Ascending aorta (tissue), 2 donors: ENCODE measurements at regions of chr4 and their contacts with region 1.

Region 1: DNA sequence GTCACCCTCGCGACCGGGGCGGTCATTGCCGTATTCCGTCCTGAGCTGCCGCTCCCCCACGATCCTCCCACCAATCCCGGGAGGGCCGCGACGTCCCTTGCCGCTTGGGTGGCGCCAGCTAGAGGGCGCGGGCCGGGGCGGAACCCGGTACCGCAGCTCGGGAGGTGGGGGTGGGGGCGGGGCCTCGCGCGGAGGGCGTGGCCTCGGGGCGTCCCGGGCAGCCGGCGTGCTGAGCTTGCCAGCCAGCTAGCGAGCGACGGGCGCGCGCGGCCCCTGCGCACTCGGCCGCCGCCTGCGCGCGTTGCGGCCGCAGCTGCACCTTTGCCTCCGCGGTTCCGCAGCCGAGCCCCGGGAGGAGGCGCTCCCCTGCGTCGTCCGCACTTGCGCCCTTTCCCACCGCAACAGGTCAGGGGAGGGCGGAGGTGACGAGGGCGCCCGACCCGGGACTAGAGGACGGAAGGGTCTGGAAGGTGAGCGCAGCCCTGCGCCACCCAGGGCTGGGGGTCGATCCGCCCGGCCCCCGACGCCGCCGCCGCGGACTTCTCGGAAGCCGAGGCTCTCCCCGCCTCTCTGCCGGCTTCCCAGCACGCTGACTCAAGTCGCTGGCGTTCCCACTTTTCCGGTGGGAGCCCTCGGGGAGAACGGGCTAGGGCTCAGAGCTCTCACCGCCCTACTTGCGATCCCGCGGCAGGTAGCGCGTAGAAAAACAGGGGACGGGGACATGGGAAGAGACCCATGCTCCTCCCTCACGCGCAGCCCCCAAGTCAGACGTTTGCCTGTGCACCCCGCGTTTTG is at the start of gene AFF1:
- DNase-seq: peak; percentile 71 to 97
- H3K4me3 ChIP-seq: peak within 1 kb of the TSS; percentile 91 to 98
- H3K27ac ChIP-seq: peak within 1 kb of the TSS; percentile 94 to 99
- H3K4me1 ChIP-seq: peaks cover 5 to 21% of the 10 kb centered on the region in 2 donors
- H3K27me3 ChIP-seq: no peaks in the 10 kb centered on the region
- CTCF ChIP-seq: peak; percentile 23 to 52 (median 33)
- total RNA-seq, gene AFF1: 112 TPM

Region 2: DNA sequence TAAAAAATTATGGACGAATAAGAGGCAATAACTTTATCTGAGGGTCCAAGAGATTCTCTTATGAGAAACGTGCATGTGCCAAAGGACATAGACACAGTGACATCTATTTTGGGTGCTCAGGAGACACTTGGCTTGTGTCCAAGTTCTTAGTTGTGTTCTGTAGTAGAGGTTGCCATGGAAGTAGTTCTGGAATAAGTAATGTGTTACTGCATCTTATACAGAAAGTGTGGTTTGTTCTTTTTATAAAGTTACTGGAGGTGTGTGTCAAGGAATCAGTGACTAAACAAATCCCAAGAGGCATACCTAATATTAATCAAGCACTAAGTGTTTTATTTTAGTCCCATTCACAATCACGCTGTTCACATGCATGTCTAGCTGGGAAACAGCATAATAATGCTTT is 1154.3 kb before region 1 on chr4:
- intact Hi-C with region 1: loop called (anchors 10 kb)
- DNase-seq: no peak
- H3K4me3 ChIP-seq: peak overlapping the region; percentile 28 to 60
- H3K27ac ChIP-seq: peak overlapping the region; percentile 51 to 79
- H3K4me1 ChIP-seq: peaks cover 0 to 18% of the 10 kb centered on the region in 2 donors
- H3K27me3 ChIP-seq: no peaks in the 10 kb centered on the region
- CTCF ChIP-seq: no peak

Region 3: GRCh38 chr4:87093443-87094123 is 158.6 kb after region 1 on chr4:
- intact Hi-C with region 1: loop called (anchors 1 kb)
- DNase-seq: no peak
- H3K4me3 ChIP-seq: no peak overlapping the region
- H3K27ac ChIP-seq: peak overlapping the region in 1 of 2 donors; percentile 28
- H3K4me1 ChIP-seq: peaks cover 0 to 11% of the 10 kb centered on the region in 2 donors
- H3K27me3 ChIP-seq: no peaks in the 10 kb centered on the region
- CTCF ChIP-seq: peak; percentile 30 to 71 (median 57)

Region 4: DNA sequence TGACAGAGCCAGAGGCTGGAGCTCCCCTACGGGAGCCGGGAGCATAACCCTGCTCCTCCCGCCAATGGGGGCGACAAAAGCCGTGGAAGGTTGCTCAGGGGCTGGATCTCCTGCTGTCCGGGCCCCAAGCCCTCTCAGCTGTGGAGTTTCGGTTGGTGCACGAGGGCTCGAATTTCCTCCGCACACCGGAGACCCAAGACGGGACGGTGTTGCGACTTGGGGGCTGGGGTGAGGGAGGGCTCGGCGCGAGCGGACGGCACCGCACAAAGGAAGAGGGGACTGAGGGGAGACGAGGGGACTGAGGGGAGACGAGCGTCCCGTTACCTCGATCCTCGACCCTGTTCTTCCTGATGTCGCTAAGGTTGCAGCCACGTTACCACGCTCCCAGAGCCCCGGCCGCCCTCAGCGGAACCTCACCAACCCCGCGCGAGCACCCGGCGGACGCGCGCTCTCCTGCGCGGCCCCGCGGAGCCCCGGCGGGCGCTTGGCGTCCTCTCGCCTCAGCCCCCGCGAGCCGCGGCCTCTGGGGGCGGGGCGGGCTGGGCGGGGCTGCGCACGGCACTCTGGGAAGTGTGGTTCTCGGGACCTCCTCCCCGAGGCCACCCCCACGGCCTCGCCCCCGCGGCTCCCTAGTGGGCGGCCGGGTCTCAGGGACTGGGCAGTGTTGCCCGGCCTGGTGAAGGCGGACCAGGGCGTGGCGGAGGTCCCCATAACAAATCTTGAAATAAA is 285.3 kb after region 1 on chr4 and contains the start of gene KLHL8:
- intact Hi-C with region 1: loop called (anchors 2 kb)
- DNase-seq: peak; percentile 63 to 95
- H3K4me3 ChIP-seq: peak within 1 kb of the TSS; percentile 91 to 99
- H3K27ac ChIP-seq: peak within 1 kb of the TSS; percentile 81 to 93
- H3K4me1 ChIP-seq: peaks cover 0 to 6% of the 10 kb centered on the region in 2 donors
- H3K27me3 ChIP-seq: no peaks in the 10 kb centered on the region
- CTCF ChIP-seq: no peak
- total RNA-seq, gene KLHL8: 5.4 TPM

Region 5: GRCh38 chr4:88284439-88285234 is 1349.7 kb after region 1 on chr4 and contains the start of gene PPM1K:
- intact Hi-C with region 1: loop called (anchors 10 kb)
- DNase-seq: peak; percentile 99 to 100
- H3K4me3 ChIP-seq: peak within 1 kb of the TSS; percentile 69 to 83
- H3K27ac ChIP-seq: peak within 1 kb of the TSS; percentile 98
- H3K4me1 ChIP-seq: peaks cover 11 to 30% of the 10 kb centered on the region in 2 donors
- H3K27me3 ChIP-seq: no peaks in the 10 kb centered on the region
- CTCF ChIP-seq: peak in 1 of 3 experiments; percentile 16
- total RNA-seq, gene PPM1K: 17.0 TPM

Region 6: DNA sequence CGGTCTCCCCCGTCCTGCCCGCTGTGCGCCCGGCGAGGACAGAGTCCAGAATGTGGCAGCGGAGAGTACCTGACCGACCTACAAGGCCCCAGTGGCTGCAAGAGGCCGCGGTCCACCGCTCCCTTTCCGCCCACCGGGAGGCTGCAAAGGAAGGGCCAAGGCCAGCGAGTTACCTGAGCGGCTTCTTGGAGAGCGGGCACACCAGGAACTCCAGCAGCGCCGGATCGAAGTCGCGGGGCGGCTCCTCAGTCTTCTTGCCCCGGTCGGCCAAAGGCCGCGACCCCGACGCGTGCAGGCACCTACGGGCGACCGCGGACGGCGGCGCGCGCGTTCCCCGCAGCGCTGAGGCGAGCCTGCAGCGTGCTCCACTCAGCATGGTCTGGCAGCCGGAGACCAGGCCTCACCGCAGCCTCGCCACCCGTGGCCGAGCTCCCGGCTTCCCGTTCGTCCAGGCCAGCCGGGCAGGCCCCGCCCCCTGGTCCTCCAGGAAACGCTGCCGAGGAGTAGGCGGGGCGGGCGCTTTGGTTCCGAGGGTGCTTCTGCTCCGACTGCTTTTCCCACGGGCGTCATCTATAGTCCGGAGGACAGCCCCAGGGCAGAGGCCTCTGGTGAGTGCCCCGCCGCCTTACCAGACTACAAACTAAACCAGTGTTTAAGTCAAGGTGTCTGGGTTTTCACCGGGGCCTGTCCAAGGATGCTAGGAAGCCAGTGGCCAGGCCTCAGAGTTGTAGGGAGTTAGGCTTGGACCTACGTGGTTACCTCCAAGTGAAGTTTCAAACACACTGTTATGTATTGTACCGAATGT is 1588.6 kb after region 1 on chr4 and contains the start of gene PYURF:
- intact Hi-C with region 1: loop called (anchors 10 kb)
- DNase-seq: peak; percentile 88 to 99
- H3K4me3 ChIP-seq: peak within 1 kb of the TSS; percentile 87 to 95
- H3K27ac ChIP-seq: peak within 1 kb of the TSS; percentile 87 to 94
- H3K4me1 ChIP-seq: peaks cover 0 to 16% of the 10 kb centered on the region in 2 donors
- H3K27me3 ChIP-seq: no peaks in the 10 kb centered on the region
- CTCF ChIP-seq: peak in 1 of 3 experiments; percentile 5
- total RNA-seq, gene PYURF: 91.6 TPM